MCF 10A (cell line): ENCODE measurements at regions of chr17 and their contacts with region 1.

Region 1: DNA sequence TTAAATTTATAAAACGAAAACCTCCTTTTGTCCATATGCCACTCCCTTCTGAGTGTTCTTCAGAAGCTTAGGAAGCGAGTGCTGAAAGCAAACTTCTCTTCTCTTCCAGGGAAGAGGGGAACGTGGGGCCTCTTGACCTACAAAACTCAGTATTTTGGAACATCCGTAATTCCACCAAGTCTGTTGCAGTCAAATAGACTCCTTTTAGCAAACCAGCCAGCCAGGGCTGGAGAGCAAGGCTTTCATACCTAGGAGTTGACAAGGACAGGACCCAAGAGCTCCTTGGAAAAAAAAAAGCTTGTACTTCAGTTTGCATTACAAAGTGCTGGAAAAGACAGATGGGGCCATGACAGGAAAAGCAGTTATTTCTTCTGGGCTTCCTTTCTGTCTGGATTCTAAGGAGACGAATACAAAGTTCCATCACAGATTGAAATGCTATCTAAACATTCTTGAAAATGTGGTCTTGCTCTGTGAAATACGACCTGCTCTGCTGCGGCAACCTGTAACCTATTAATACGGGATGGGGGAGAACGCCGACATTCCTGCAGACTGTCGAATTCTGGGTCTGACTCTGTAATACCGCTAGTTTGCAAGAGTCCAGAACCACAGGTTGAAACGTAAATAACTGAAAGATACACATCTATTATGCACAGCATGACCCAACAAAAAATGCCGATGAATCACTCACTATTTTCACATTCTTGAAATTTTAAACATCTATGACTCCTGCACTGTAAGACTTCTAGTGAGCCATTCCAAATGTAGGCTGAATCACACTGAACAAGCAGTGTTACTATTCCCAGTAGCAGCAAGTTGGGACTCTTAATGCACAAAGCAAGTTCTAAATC is 20.6 kb downstream of the VPS53 start:
- DNase-seq: peak; percentile 78
- H3K4me3 Mint-ChIP-seq: peak overlapping the region; percentile 55
- H3K27ac Mint-ChIP-seq: peak overlapping the region; percentile 75
- H3K4me1 Mint-ChIP-seq: peaks cover 30% of the 10 kb centered on the region
- H3K27me3 Mint-ChIP-seq: no peaks in the 10 kb centered on the region
- CTCF ChIP-seq: no peak

Region 2: GRCh38 chr17:549177-550040 is 144.6 kb before region 1 on chr17:
- CTCF ChIA-PET with region 1: no interaction called
- POLR2A ChIA-PET with region 1: no interaction called
- intact Hi-C with region 1: loop called (anchors 10 kb)
- DNase-seq: no peak
- H3K4me3 Mint-ChIP-seq: no peak overlapping the region
- H3K27ac Mint-ChIP-seq: no peak overlapping the region
- H3K4me1 Mint-ChIP-seq: peaks cover 6% of the 10 kb centered on the region
- H3K27me3 Mint-ChIP-seq: no peaks in the 10 kb centered on the region
- CTCF ChIP-seq: no peak

Region 3: DNA sequence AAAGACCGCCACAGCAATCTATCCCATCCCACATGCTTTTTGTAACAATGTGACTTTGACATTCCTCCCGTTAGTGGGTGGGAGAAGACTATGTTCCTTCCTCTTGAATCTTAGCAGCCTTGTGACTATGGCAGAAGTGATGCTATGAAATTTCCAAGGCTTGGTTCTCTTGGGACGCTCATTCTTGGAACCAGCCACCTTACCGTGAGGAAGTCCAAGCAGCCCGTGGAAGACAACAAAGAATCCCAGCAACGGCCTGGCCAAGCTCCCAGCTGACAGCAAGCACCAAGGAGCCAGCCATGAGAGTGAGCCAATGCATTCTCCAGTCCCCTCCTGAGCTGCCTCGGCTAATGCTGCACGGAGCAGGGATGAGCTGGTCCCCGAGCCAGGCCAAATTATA is 41.7 kb before region 1 on chr17:
- CTCF ChIA-PET with region 1: no interaction called
- POLR2A ChIA-PET with region 1: no interaction called
- intact Hi-C with region 1: no loop called
- DNase-seq: no peak
- H3K4me3 Mint-ChIP-seq: no peak overlapping the region
- H3K27ac Mint-ChIP-seq: no peak overlapping the region
- H3K4me1 Mint-ChIP-seq: no peaks in the 10 kb centered on the region
- H3K27me3 Mint-ChIP-seq: no peaks in the 10 kb centered on the region
- CTCF ChIP-seq: no peak